Activated T-helper 1 cell treated with anti-CD3 and anti-CD28 coated beads, Interleukin-12 subunit alpha, Interleukin-12 subunit beta, Interleukin-2, Interleukin-4 antibody, amounts not matched to agents 30 ng/mL and 10 ng/mL and 1 ng/mL, durations not matched to agents 14 hours and 24 hours and 36 hours (primary cell): ENCODE measurements at regions of chr17 and their contacts with region 1.

Region 1: GRCh38 chr17:42388381-42389134 is at the start of gene STAT3:
- DNase-seq: peak; percentile 100
- H3K4me3 Mint-ChIP-seq: peak within 1 kb of the TSS; percentile 92
- H3K27ac Mint-ChIP-seq: peak within 1 kb of the TSS; percentile 100
- H3K4me1 Mint-ChIP-seq: peaks cover 54% of the 10 kb centered on the region
- H3K27me3 Mint-ChIP-seq: no peaks in the 10 kb centered on the region
- total RNA-seq, gene STAT3: 240 and 241 TPM in 2 replicates

Region 2: DNA sequence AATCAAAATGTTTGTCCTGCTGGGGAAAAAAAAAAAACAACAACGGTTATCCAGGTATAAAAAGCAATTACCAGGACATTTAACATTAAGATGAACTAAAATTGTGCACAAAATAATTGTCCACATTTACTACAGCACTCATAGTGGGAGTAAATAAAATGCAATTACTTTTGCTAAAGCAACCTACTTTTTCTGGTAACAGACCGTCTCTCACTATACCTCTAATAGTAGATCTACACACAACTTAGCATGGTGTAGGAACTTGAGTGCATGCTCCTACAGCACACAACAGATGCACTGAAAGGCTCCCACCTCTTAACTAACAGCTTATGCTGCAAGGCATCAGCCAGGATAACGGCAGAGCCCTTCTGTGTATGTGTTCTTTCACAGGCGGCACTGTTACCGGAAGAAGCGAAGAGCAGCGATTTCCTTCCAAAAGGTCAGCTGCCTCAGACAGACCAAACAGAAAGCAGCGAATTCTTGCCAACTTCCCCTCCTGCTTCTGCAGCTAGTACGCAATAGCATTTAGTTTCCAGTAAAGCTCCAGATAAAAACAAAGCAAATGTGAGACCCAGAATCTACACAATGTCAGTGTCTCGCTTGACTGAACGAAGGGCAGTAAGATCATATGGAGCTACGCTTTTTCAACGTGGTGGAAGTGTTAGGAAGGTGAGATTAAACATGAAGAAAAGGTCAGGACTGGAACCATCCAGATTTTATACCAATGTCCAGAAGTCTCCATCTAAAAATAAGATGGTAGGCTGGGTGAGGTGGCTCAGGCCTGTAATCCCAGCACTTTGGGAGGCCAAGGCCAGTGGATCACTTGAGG is 140.0 kb before region 1 on chr17:
- intact Hi-C with region 1: loop called (anchors 2 kb)
- DNase-seq: peak; percentile 77
- H3K4me3 Mint-ChIP-seq: peak overlapping the region; percentile 89
- H3K27ac Mint-ChIP-seq: peak overlapping the region; percentile 99
- H3K4me1 Mint-ChIP-seq: peaks cover 61% of the 10 kb centered on the region
- H3K27me3 Mint-ChIP-seq: no peaks in the 10 kb centered on the region

Region 3: DNA sequence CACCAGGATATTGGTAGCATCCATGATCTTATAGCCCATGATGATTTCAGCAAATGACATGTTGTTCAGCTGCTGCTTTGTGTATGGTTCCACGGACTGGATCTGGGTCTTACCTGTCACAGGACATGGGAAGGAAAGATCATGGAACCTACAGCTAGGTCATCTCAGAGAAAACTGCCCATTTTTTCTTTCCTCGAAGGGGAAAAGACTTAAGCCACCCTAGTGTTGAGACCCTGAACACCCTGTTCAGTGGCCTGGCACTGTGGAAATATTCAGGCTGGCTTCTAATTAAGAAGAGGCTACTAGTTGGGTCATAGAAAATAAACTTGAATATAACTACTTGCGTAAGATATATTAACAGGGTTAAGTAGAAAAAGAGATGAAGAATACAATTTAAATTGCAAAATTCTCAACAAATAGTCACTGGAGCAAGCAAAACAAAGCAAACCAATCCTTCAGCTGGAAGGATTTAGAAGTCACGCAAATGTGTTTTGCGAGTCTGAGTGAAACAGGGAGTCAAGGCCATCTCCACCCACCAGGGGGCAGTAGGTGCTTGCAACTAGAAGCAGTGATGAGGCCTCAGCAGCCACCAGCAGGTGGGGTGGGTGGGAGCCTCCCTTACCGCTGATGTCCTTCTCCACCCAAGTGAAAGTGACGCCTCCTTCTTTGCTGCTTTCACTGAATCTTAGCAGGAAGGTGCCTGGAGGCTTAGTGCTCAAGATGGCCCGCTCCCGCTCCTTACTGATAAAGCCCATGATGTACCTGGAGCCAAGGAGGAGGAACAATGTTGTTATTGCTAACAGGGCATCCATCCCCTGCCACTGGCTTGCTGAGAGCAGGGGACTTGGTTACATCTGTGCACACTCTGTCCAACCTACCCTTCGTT is 65.9 kb before region 1 on chr17:
- intact Hi-C with region 1: loop called (anchors 1 kb)
- DNase-seq: peak; percentile 87
- H3K4me3 Mint-ChIP-seq: no peak overlapping the region
- H3K27ac Mint-ChIP-seq: peak overlapping the region; percentile 1
- H3K4me1 Mint-ChIP-seq: peaks cover 55% of the 10 kb centered on the region
- H3K27me3 Mint-ChIP-seq: no peaks in the 10 kb centered on the region

Region 4: DNA sequence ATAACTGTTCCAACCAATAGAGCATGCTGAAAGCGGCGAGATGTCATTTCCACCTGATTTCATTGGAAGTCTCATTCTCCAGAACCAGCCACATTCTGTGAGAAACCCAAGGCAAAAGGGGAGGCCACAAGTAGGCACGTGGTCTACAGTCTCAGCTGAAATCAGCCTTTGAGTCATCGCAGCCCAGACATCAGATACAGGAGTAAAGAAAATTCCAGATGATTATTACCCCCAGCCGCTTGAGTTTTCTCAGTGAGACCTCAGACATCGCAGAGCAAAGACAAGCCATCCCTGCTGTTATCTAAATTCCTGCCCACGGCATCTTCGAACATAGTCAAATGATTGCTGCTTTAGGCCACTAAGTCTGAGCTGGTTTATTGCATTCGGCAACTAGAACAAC is 23.4 kb before region 1 on chr17:
- intact Hi-C with region 1: loop called (anchors 1 kb)
- DNase-seq: no peak
- H3K4me3 Mint-ChIP-seq: peak overlapping the region; percentile 57
- H3K27ac Mint-ChIP-seq: peak overlapping the region; percentile 87
- H3K4me1 Mint-ChIP-seq: peaks cover 73% of the 10 kb centered on the region
- H3K27me3 Mint-ChIP-seq: no peaks in the 10 kb centered on the region

Region 5: DNA sequence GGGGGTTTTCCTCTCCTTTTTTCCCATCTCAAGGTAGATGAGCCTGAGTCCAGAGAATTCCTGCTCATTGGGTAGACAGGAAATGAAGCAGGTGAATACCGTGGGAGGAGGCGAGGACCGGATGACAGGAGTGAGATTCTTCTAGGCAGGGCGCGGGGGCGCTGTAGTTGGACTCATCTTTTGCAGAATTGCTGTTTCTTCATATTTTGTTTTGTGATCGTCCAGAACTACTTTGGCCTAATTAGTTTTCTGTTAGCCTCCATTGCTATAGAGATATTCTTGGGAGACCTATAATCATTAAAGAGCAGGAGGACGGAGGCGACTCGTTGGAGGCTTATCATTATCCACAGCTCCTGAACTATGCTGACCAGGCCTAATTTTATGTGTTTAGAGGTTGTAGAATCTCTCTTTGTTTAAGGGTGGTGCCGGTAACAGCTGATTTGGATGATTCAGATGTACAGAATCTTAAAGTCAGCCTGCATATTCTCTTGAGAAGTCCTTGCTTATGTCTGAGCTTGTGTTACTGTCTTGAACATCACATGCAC is 70.8 kb after region 1 on chr17:
- intact Hi-C with region 1: loop called (anchors 1 kb)
- DNase-seq: peak; percentile 5
- H3K4me3 Mint-ChIP-seq: peak overlapping the region; percentile 91
- H3K27ac Mint-ChIP-seq: peak overlapping the region; percentile 93
- H3K4me1 Mint-ChIP-seq: peaks cover 44% of the 10 kb centered on the region
- H3K27me3 Mint-ChIP-seq: peaks cover 10% of the 10 kb centered on the region